ENCODE measurements at regions of chr19 and their contacts with region 1.

Region 1: GRCh38 chr19:2529473-2529918 is 53.6 kb downstream of the GADD45B start:
- DNase-seq: peak in 1 of 4 experiments; percentile 46
- ATAC-seq: peak; percentile 88
- H3K4me3 ChIP-seq: no peak overlapping the region
- H3K27ac ChIP-seq: no peak overlapping the region; the same call in 2 of the 3 replicates
- H3K4me1 ChIP-seq: peaks cover 5 to 24% of the 10 kb centered on the region in 2 experiments
- H3K27me3 ChIP-seq: no peaks in the 10 kb centered on the region; a peak in 1 of 5 replicates
- CTCF ChIP-seq: no peak
- EP300 ChIP-seq: peak; percentile 86
- POLR2A ChIP-seq: no peak
- RAD21 ChIP-seq: peak in 1 of 2 experiments; percentile 24; a peak in 1 of 4 replicates

Region 2: DNA sequence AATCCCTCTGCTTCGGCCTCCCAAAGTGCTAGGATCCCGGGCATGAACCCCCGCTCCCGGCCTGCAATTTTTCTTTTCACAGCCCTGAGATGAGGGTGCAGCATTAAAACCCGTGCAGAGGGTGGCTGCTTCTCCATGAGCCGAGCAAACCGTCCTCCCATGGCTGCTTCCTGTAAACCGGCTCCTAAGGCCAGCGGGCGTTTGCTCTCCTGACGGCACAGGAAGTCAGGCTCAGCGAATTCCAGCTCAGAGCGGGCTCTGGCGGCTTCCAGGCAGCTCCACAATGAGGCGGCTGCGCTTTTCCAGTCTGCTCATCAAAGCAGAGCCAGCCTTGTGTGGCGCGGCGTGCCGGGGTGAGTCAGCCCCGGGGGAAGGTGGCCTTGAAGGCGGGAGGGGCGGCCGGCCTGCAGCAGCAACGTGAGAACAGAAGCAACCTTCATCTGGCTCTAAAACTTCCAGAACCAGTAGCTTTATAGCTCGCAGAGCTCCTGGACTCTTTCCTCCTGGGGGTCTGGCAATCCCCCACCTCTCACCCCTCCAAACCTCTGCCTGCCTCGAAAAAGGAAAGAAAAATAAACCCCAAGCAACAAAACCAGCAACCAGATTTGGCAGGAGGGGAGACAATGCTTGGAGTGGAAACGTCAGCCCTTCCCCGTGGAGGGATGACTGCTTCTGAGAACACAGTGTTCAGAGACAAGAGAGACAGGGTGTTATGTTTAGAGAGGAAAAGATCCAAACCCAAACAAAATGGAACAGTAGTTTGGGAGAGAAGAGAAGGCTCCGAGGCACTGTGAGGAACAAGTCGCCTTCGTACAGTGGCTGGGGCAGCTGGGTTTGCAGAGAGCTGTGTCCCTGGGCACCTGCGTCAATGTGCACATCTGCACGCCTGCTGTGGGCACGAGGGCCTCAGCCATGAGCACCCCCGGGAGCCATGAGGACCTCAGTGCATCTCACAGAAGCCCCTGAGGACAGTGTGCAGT is 14.3 kb after region 1 on chr19:
- CTCF ChIA-PET with region 1: interaction called, 4 read pairs
- POLR2A ChIA-PET with region 1: interaction called, 11 read pairs
- in situ Hi-C with region 1: no loop called
- intact Hi-C with region 1: no loop called
- DNase-seq: peak; percentile 65 to 75 (median 67)
- ATAC-seq: peak; percentile 94
- H3K4me3 ChIP-seq: no peak overlapping the region
- H3K27ac ChIP-seq: peak overlapping the region; percentile 23; the same call in 1 of the 3 replicates
- H3K4me1 ChIP-seq: peaks cover 4 to 31% of the 10 kb centered on the region in 2 experiments; a peak in 4 of 5 replicates
- H3K27me3 ChIP-seq: 0 out of 5 replicates have a peak, but pooled peaks cover 0 to 8% of the 10 kb centered on the region in 2 experiments
- CTCF ChIP-seq: peak in 2 of 3 experiments; percentile 12 to 38; a peak in 1 of 6 replicates
- EP300 ChIP-seq: no peak
- POLR2A ChIP-seq: no peak
- RAD21 ChIP-seq: peak; percentile 54 to 69; a peak in 3 of 4 replicates

Region 3: GRCh38 chr19:2575734-2576481 is 46.4 kb after region 1 on chr19:
- CTCF ChIA-PET with region 1: no interaction called
- POLR2A ChIA-PET with region 1: no interaction called
- in situ Hi-C with region 1: no loop called
- intact Hi-C with region 1: no loop called
- DNase-seq: no peak
- ATAC-seq: no peak
- H3K4me3 ChIP-seq: no peak overlapping the region
- H3K27ac ChIP-seq: no peak overlapping the region
- H3K4me1 ChIP-seq: peaks cover 0 to 28% of the 10 kb centered on the region in 2 experiments; a peak in 2 of 5 replicates
- H3K27me3 ChIP-seq: peaks cover 6 to 64% of the 10 kb centered on the region in 2 experiments; a peak in 4 of 5 replicates
- CTCF ChIP-seq: no peak
- EP300 ChIP-seq: no peak
- POLR2A ChIP-seq: no peak
- RAD21 ChIP-seq: no peak